ENCODE measurements at regions of chr11 and their contacts with region 1.

Region 1: DNA sequence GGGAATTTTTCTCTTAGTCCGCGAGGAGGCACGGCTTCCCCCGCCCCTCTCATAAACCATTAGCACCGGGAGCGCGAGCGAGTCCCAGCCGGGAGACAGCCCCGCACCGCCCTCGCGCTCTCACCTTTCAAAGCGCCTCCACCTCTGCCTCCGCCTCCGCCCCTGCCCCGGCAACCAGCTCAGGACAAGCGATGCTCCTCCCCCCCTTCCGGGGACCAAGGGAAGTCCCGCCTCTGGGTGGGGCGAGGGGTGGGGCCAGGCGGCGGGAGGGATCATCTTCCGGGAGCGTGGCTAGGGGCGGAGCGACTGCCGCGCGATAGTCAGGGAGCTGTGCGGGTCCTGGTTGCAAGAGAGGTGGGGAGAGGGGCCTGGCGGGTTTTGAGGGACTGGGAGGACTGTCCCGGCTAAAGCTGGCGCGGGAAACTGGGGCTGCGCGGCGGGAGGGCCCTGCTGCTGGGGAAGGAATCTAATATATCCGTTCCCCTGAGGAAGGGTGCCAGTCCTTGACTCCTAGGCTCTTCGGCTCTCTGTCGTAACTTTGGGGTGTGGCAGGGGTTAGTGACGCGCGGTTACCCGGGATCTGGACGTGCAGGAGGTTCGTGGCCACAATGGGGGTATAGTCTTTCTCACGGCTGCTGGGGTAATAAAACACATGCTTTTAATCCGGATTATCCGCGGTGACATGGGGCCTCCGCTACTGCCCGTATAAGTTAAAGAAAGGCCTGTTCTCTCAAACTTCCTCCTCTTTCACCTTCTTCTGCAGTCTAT is at the starts of genes CCDC82 and JRKL:
- DNase-seq: peak; percentile 92 to 98
- H3K4me3 ChIP-seq: peak within 1 kb of the TSS; percentile 75
- H3K27ac ChIP-seq: peak within 1 kb of the TSS; percentile 58
- H3K4me1 ChIP-seq: peaks cover 27% of the 10 kb centered on the region
- H3K27me3 ChIP-seq: no peaks in the 10 kb centered on the region
- CTCF ChIP-seq: no peak
- total RNA-seq, gene CCDC82: 18.6 and 19.9 TPM in 2 replicates
- total RNA-seq, gene JRKL: 12.4 and 13.5 TPM in 2 replicates

Region 2: GRCh38 chr11:95790123-95790932 is 599.6 kb before region 1 on chr11 and contains the start of gene CEP57:
- CTCF ChIA-PET with region 1: interaction called, 4 read pairs
- POLR2A ChIA-PET with region 1: interaction called, 13 read pairs
- intact Hi-C with region 1: loop called (anchors 1 kb)
- DNase-seq: peak; percentile 91 to 96
- H3K4me3 ChIP-seq: peak within 1 kb of the TSS; percentile 87
- H3K27ac ChIP-seq: peak within 1 kb of the TSS; percentile 85
- H3K4me1 ChIP-seq: peaks cover 26% of the 10 kb centered on the region
- H3K27me3 ChIP-seq: no peaks in the 10 kb centered on the region
- CTCF ChIP-seq: no peak
- total RNA-seq, gene CEP57: 62.1 and 64.5 TPM in 2 replicates

Region 3: GRCh38 chr11:95917193-95918036 is 472.5 kb before region 1 on chr11:
- CTCF ChIA-PET with region 1: no interaction called
- POLR2A ChIA-PET with region 1: no interaction called
- intact Hi-C with region 1: loop called (anchors 5 kb)
- DNase-seq: peak; percentile 9 to 38
- H3K4me3 ChIP-seq: no peak overlapping the region
- H3K27ac ChIP-seq: no peak overlapping the region
- H3K4me1 ChIP-seq: peaks cover 54% of the 10 kb centered on the region
- H3K27me3 ChIP-seq: no peaks in the 10 kb centered on the region
- CTCF ChIP-seq: no peak

Region 4: DNA sequence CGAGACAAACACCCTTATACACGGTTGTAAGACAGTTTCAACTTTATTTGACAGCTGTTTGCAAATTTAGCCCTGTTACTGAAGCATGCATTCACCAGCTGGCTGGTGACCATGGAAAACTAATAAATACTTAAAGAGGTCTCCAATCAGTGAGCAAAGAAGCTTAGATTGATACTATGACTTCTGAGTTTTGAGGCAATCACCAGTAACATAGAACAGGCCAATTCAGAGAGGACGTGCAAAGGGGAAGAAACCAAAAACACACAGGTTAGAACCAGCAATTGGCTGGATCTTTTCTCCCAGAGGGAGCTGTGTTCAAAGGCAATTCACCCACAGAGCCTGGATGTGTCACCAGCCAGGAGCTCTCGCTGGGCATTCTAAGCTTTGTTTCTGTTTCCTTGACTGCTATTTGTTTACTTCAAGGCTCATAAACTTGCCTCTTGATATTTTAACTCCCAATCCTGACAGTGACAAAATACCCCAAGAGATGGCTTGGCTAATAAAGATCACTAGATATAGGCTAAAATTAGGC is 352.4 kb before region 1 on chr11:
- CTCF ChIA-PET with region 1: no interaction called
- POLR2A ChIA-PET with region 1: interaction called, 3 read pairs
- intact Hi-C with region 1: loop called (anchors 5 kb)
- DNase-seq: peak; percentile 66 to 100
- H3K4me3 ChIP-seq: peak overlapping the region; percentile 38; the same call in 1 of the 2 replicates
- H3K27ac ChIP-seq: peak overlapping the region; percentile 95
- H3K4me1 ChIP-seq: peaks cover 79% of the 10 kb centered on the region
- H3K27me3 ChIP-seq: no peaks in the 10 kb centered on the region
- CTCF ChIP-seq: no peak

Region 5: GRCh38 chr11:96149743-96150555 is 240.0 kb before region 1 on chr11:
- CTCF ChIA-PET with region 1: no interaction called
- POLR2A ChIA-PET with region 1: no interaction called
- intact Hi-C with region 1: no loop called
- DNase-seq: peak in 1 of 2 experiments; percentile 36
- H3K4me3 ChIP-seq: no peak overlapping the region
- H3K27ac ChIP-seq: no peak overlapping the region
- H3K4me1 ChIP-seq: peaks cover 23% of the 10 kb centered on the region
- H3K27me3 ChIP-seq: no peaks in the 10 kb centered on the region
- CTCF ChIP-seq: no peak

Region 6: GRCh38 chr11:96197801-96198701 is 191.9 kb before region 1 on chr11:
- CTCF ChIA-PET with region 1: no interaction called
- POLR2A ChIA-PET with region 1: interaction called, 11 read pairs
- intact Hi-C with region 1: no loop called
- DNase-seq: no peak
- H3K4me3 ChIP-seq: no peak overlapping the region
- H3K27ac ChIP-seq: no peak overlapping the region
- H3K4me1 ChIP-seq: peaks cover 15% of the 10 kb centered on the region
- H3K27me3 ChIP-seq: no peaks in the 10 kb centered on the region
- CTCF ChIP-seq: no peak

Region 7: GRCh38 chr11:96242971-96243647 is 146.8 kb before region 1 on chr11:
- CTCF ChIA-PET with region 1: interaction called, 11 read pairs
- POLR2A ChIA-PET with region 1: interaction called, 4 read pairs
- intact Hi-C with region 1: loop called (anchors 5 kb)
- DNase-seq: peak; percentile 91 to 97
- H3K4me3 ChIP-seq: peak overlapping the region; percentile 55
- H3K27ac ChIP-seq: peak overlapping the region; percentile 94
- H3K4me1 ChIP-seq: peaks cover 61% of the 10 kb centered on the region
- H3K27me3 ChIP-seq: no peaks in the 10 kb centered on the region
- CTCF ChIP-seq: no peak

Region 8: DNA sequence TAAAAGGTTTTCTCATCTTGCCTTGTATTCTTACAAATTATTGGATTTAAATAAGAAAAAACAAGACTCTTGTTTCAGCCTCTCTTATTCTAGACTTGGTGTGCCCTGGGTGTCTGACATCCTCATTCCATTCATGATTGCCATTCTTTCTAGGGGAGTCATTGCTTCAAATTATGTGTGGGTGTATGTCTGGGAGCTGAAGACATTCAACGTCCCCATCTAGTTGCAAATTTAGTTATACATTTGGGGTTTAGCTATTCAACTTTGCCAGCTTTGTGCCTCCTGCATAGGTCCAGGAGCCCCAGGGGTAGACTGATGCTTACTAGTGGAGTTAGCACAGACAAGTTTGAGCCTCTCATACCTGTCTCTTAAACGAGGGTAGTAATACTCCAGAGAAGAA is 64.9 kb before region 1 on chr11:
- CTCF ChIA-PET with region 1: no interaction called
- POLR2A ChIA-PET with region 1: interaction called, 11 read pairs
- intact Hi-C with region 1: no loop called
- DNase-seq: peak; percentile 49 to 97
- H3K4me3 ChIP-seq: peak overlapping the region; percentile 23; the same call in 1 of the 2 replicates
- H3K27ac ChIP-seq: peak overlapping the region; percentile 86
- H3K4me1 ChIP-seq: peaks cover 56% of the 10 kb centered on the region
- H3K27me3 ChIP-seq: no peaks in the 10 kb centered on the region
- CTCF ChIP-seq: no peak